MCF 10A (cell line): ENCODE measurements at regions of chr14 and their contacts with region 1.

Region 1: GRCh38 chr14:26841920-26842741 is 244.3 kb upstream of the NOVA1 start:
- DNase-seq: peak; percentile 94
- H3K4me3 Mint-ChIP-seq: peak overlapping the region; percentile 26
- H3K27ac Mint-ChIP-seq: peak overlapping the region; percentile 95
- H3K4me1 Mint-ChIP-seq: peaks cover 17% of the 10 kb centered on the region
- H3K27me3 Mint-ChIP-seq: no peaks in the 10 kb centered on the region
- CTCF ChIP-seq: no peak

Region 2: GRCh38 chr14:26454105-26454504 is 388.0 kb before region 1 on chr14:
- CTCF ChIA-PET with region 1: no interaction called
- POLR2A ChIA-PET with region 1: no interaction called
- intact Hi-C with region 1: no loop called
- DNase-seq: no peak
- H3K4me3 Mint-ChIP-seq: no peak overlapping the region
- H3K27ac Mint-ChIP-seq: no peak overlapping the region
- H3K4me1 Mint-ChIP-seq: no peaks in the 10 kb centered on the region
- H3K27me3 Mint-ChIP-seq: peaks cover 40% of the 10 kb centered on the region
- CTCF ChIP-seq: no peak

Region 3: DNA sequence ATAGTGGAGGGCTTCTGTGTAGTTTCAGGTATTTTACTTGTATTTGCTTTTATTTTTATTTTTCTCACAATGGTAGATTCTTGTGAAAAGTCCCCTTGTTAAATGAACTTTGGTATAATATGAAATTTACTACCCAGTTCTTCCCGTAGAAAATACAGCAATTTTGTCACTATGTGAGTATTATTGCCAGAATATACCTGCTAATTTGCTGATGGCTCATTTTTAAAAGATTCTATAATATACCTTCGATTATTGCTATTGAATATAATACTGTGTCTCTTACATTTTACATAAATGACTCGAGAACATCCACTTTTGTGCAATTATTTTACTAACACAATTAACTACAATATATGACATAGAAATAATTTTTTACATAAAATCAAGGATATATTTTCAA is 18.0 kb after region 1 on chr14:
- CTCF ChIA-PET with region 1: no interaction called
- POLR2A ChIA-PET with region 1: no interaction called
- intact Hi-C with region 1: loop called (anchors 2 kb)
- DNase-seq: no peak
- H3K4me3 Mint-ChIP-seq: no peak overlapping the region
- H3K27ac Mint-ChIP-seq: no peak overlapping the region
- H3K4me1 Mint-ChIP-seq: no peaks in the 10 kb centered on the region
- H3K27me3 Mint-ChIP-seq: peaks cover 14% of the 10 kb centered on the region
- CTCF ChIP-seq: no peak

Region 4: GRCh38 chr14:26947265-26947664 is 105.1 kb after region 1 on chr14:
- CTCF ChIA-PET with region 1: no interaction called
- POLR2A ChIA-PET with region 1: no interaction called
- intact Hi-C with region 1: no loop called
- DNase-seq: no peak
- H3K4me3 Mint-ChIP-seq: no peak overlapping the region
- H3K27ac Mint-ChIP-seq: no peak overlapping the region
- H3K4me1 Mint-ChIP-seq: no peaks in the 10 kb centered on the region
- H3K27me3 Mint-ChIP-seq: peaks cover 16% of the 10 kb centered on the region
- CTCF ChIP-seq: no peak